ENCODE measurements at regions of chr7 and their contacts with region 1.

Region 1: GRCh38 chr7:103541026-103541425 is 95.0 kb upstream of the SLC26A5 start:
- DNase-seq: no peak

Region 2: GRCh38 chr7:103466814-103467213 is 74.2 kb before region 1 on chr7:
- in situ Hi-C with region 1: no loop called
- DNase-seq: peak; percentile 60

Region 3: DNA sequence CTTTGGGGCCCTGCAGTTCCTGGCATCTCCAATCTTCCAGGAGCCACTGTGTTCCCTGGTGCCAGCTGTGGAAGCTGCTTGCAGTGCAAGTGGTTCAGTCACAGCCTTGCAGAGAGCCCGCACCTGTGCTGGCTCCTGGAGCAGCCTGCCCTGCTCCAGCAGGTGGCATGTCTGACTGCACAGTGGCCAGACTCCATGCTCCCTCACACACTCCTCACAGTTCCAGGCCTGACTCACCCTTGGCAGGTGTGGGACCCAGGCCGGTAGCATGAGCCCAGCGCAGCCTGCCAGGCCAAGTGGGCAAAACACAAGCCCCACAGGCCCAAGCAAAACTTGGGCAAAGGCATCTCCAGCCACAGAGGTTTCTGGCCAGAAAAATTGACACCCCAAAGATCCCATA is 482.1 kb after region 1 on chr7:
- in situ Hi-C with region 1: no loop called
- DNase-seq: no peak

Region 4: DNA sequence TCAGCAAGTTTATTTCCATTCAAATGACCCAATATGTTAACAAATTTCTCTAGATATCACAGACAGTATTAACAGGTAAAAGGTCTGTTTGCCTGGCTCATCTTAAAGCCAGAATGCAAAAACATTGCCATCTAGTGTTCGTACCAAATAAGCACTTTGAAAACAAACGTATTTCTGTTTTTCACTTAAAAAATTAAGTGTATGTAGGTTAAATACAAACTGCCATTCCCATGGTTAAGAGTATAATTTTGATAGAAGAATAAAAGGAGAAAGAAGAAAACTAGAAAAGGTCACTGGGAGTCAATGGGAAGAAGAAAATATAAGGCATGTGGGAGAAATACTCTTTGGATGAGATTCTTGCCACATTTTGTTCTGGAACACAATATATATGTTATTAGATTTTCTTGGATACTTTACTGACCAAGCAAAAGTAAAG is 615.8 kb after region 1 on chr7:
- in situ Hi-C with region 1: loop called (anchors 25 kb)
- DNase-seq: peak; percentile 65